ENCODE measurements at regions of chr11 and their contacts with region 1.

Region 1: DNA sequence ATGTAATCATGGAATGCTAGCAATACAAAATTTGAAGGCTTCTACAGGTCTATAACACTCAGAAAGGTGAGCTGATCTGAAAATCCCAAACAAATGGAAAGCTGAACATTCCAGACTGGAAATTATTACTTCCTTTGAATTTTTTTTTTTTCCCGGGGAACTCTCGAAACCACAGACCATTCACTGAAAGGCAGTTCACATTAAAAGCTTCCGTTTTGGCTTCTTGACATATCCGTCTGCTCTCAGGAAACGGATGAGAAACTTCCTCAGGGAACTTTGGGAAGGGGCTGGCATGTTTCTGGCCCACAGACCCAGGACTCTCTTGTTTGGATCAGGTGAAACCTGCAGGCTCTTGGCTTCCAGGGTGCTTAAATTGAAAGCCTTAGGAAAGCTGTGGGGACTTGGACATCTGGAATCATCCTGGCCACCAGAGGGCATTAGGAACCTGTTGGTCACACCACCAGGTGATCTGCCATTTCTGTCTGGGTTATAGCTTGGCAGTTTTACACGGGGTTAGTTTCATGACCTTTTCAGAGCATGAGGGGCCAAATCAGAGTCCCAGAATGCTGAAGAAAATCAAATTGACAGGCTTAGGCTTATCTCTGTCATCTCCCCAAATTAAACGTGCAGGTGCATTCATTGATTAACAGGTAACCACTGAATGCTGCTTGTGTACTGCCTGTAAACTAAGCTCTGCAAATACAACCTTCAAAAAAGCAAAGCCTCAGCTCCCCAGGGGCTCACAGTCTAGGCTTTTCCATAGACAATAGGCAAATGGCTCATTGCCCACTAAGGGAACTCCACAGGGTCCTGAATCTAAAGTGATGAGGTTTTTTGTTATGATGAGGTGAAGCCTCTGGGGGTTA is 22.7 kb upstream of the GRAMD1B start:
- DNase-seq: peak; percentile 78
- ATAC-seq: peak; percentile 89
- H3K4me3 Mint-ChIP-seq: no peak overlapping the region
- H3K27ac Mint-ChIP-seq: peak overlapping the region; percentile 49; the same call in 1 of the 2 replicates
- H3K4me1 Mint-ChIP-seq: peaks cover 30% of the 10 kb centered on the region
- H3K27me3 Mint-ChIP-seq: peaks cover 36% of the 10 kb centered on the region
- CTCF ChIP-seq: peak; percentile 45; the same call in 1 of the 2 replicates

Region 2: DNA sequence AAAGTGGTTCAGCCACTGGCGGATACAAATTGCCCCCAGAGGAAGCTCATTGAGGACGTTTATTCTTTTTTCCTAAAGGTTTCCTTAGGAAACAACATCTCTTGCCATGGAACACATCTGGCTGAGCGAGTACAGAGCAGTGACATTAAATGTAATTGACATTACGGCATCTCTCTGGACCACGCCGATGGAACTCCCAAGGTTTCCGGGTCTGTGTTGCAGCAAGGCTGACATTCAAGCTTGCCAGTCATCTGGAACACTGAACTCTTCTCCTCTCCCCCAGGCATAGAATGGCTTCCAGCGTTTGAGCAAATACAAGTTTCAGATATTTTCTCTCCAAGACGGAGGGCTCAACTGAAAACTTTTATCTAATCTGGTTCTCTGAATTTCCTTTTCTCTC is 254.4 kb before region 1 on chr11:
- CTCF ChIA-PET with region 1: no interaction called
- POLR2A ChIA-PET with region 1: no interaction called
- DNase-seq: no peak
- ATAC-seq: no peak
- H3K4me3 Mint-ChIP-seq: no peak overlapping the region
- H3K27ac Mint-ChIP-seq: no peak overlapping the region
- H3K4me1 Mint-ChIP-seq: peaks cover 8% of the 10 kb centered on the region; the same call in 1 of the 2 replicates
- H3K27me3 Mint-ChIP-seq: no peaks in the 10 kb centered on the region
- CTCF ChIP-seq: no peak

Region 3: GRCh38 chr11:123301696-123302400 is 105.5 kb before region 1 on chr11:
- CTCF ChIA-PET with region 1: interaction called, 23 read pairs
- POLR2A ChIA-PET with region 1: no interaction called
- DNase-seq: peak; percentile 83
- ATAC-seq: peak; percentile 77
- H3K4me3 Mint-ChIP-seq: peak overlapping the region; percentile 82
- H3K27ac Mint-ChIP-seq: no peak overlapping the region
- H3K4me1 Mint-ChIP-seq: peaks cover 25% of the 10 kb centered on the region
- H3K27me3 Mint-ChIP-seq: peaks cover 27% of the 10 kb centered on the region
- CTCF ChIP-seq: peak; percentile 85

Region 4: GRCh38 chr11:123381817-123382554 is 25.4 kb before region 1 on chr11:
- CTCF ChIA-PET with region 1: interaction called, 11 read pairs
- POLR2A ChIA-PET with region 1: no interaction called
- DNase-seq: no peak
- ATAC-seq: no peak
- H3K4me3 Mint-ChIP-seq: no peak overlapping the region
- H3K27ac Mint-ChIP-seq: no peak overlapping the region
- H3K4me1 Mint-ChIP-seq: peaks cover 29% of the 10 kb centered on the region
- H3K27me3 Mint-ChIP-seq: peaks cover 4% of the 10 kb centered on the region; the same call in 1 of the 2 replicates
- CTCF ChIP-seq: no peak

Region 5: GRCh38 chr11:123461164-123461563 is 53.8 kb after region 1 on chr11:
- CTCF ChIA-PET with region 1: interaction called, 11 read pairs
- POLR2A ChIA-PET with region 1: no interaction called
- DNase-seq: no peak
- ATAC-seq: no peak
- H3K4me3 Mint-ChIP-seq: no peak overlapping the region
- H3K27ac Mint-ChIP-seq: no peak overlapping the region; the same call in 1 of the 2 replicates
- H3K4me1 Mint-ChIP-seq: no peaks in the 10 kb centered on the region
- H3K27me3 Mint-ChIP-seq: no peaks in the 10 kb centered on the region
- CTCF ChIP-seq: no peak

Region 6: DNA sequence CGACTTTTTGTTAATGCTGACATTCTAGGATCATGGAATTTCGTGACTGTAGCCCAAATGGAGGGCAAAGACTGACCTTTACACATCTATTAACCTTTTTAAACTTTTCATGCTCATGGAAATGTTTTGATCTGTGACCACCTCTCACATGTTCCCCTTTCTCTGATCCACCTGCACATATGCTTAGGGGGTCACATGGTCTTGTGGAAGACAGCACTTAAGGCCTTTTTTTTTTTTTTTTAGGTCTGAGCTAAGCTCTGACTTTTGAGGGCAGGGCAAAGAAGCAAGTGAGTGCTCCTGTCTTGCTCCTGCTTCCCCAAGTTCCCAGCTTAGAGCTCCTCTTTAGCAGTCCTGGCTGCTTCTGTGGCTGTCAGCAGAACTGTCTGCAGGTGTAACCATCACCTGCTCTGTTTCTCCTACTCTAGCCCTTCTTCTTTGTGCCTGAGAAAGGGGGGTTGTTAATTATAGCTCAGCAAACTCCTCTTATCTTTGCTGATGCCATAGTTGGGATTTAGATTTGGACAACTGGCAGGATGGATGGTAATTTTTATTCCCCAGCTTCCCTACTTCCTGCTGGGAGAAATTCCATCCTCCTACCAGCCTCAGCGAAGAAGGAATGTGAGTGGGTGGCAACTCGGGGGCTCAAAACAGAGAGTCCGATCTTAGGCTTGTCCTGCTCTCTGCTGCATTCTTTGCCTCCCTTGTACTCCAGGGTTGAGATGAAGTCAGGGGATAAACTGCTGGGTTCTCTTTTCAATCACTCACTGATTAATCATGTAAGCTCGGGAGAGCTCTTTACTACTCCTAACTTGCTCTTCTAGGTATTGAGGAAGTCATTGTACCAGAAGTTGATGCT is 87.1 kb after region 1 on chr11:
- CTCF ChIA-PET with region 1: interaction called, 19 read pairs
- POLR2A ChIA-PET with region 1: no interaction called
- DNase-seq: no peak
- ATAC-seq: peak; percentile 65
- H3K4me3 Mint-ChIP-seq: no peak overlapping the region
- H3K27ac Mint-ChIP-seq: peak overlapping the region; percentile 64; the same call in 1 of the 2 replicates
- H3K4me1 Mint-ChIP-seq: peaks cover 31% of the 10 kb centered on the region
- H3K27me3 Mint-ChIP-seq: no peaks in the 10 kb centered on the region
- CTCF ChIP-seq: no peak

Region 7: DNA sequence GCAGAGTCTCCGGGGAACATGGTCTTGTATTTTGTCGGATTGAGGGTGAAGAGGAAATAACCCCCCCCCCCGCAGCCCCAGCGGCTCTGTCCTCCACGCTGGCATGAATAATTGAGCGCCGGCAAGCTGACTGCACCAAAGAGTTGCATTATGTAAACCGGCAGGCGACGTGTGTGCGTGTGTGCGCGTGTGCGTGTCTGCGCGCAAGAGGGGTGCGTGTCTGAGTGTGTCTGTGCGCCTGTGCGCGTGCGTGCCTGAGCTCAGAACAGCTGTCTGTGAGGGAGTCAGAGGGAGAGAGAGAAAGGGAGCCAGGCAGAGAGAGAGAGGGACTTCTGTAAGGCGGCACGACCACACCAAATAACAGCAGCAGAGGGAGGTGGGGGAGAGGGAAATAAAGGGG is 152.6 kb after region 1 on chr11:
- CTCF ChIA-PET with region 1: interaction called, 19 read pairs
- POLR2A ChIA-PET with region 1: no interaction called
- DNase-seq: no peak
- ATAC-seq: peak; percentile 31
- H3K4me3 Mint-ChIP-seq: peak overlapping the region; percentile 55
- H3K27ac Mint-ChIP-seq: peak overlapping the region; percentile 82; the same call in 1 of the 2 replicates
- H3K4me1 Mint-ChIP-seq: peaks cover 42% of the 10 kb centered on the region
- H3K27me3 Mint-ChIP-seq: no peaks in the 10 kb centered on the region
- CTCF ChIP-seq: no peak

Region 8: DNA sequence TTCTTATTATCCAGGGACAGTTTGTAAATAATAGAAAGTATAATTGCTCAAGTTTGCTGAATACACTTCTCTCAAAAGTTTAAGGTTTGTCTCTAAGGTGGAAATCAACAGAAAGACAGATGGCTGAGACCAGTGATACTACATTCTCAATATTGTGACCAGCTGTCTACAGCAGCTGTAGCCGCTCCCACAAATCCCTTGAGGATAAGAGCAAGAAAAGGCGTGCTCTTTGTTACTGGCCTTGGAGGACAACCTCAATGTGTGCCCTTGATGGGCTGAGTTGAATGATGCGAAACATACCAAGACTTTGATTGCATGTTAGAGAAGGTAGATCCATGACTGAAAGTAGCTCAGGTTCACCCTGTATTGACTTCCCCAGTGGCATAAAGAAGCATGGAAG is 392.7 kb after region 1 on chr11:
- CTCF ChIA-PET with region 1: no interaction called
- POLR2A ChIA-PET with region 1: no interaction called
- DNase-seq: no peak
- ATAC-seq: no peak
- H3K4me3 Mint-ChIP-seq: no peak overlapping the region
- H3K27ac Mint-ChIP-seq: no peak overlapping the region
- H3K4me1 Mint-ChIP-seq: peaks cover 31% of the 10 kb centered on the region
- H3K27me3 Mint-ChIP-seq: peaks cover 2% of the 10 kb centered on the region; the same call in 1 of the 2 replicates
- CTCF ChIP-seq: no peak